Activated CD4-positive, alpha-beta memory T cell treated with anti-CD3 and anti-CD28 coated beads for 36 hours (primary cell): ENCODE measurements at regions of chrX and their contacts with region 1.

Region 1: DNA sequence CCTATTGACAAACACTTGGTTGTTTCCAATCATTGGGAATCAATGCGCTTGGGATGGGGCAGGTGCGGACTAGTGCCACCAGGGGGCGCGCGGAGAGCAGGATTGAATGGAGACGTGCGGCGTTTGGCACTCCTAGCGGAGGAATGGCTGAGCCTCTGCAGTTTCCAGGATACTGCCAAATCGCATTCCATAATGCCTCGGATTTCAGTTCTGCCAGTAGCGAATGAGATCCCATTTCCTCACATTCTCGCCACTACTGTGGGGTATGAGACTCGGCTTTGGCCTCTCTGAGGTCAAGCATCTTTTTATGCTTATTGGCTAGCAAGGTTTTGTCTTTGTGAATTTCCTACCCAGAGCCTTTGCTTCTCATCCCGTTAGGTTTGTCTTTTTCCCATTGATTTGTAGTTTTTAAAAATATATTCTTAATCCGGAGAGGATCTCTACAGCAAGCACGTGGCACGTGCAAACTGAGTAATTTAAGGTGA is 28.7 kb downstream of the CLDN34 start:
- DNase-seq: peak; percentile 78
- H3K4me3 Mint-ChIP-seq: no peak overlapping the region
- H3K27ac Mint-ChIP-seq: no peak overlapping the region
- H3K4me1 Mint-ChIP-seq: peaks cover 20% of the 10 kb centered on the region
- H3K27me3 Mint-ChIP-seq: no peaks in the 10 kb centered on the region

Region 2: GRCh38 chrX:9482408-9482807 is 513.5 kb before region 1 on chrX:
- CTCF ChIA-PET with region 1: no interaction called
- POLR2A ChIA-PET with region 1: no interaction called
- intact Hi-C with region 1: no loop called
- DNase-seq: no peak
- H3K4me3 Mint-ChIP-seq: no peak overlapping the region
- H3K27ac Mint-ChIP-seq: no peak overlapping the region
- H3K4me1 Mint-ChIP-seq: peaks cover 9% of the 10 kb centered on the region
- H3K27me3 Mint-ChIP-seq: no peaks in the 10 kb centered on the region

Region 3: GRCh38 chrX:9873952-9874351 is 121.9 kb before region 1 on chrX:
- CTCF ChIA-PET with region 1: interaction called, 3 read pairs
- POLR2A ChIA-PET with region 1: no interaction called
- intact Hi-C with region 1: loop called (anchors 1 kb)
- DNase-seq: peak; percentile 48
- H3K4me3 Mint-ChIP-seq: no peak overlapping the region
- H3K27ac Mint-ChIP-seq: no peak overlapping the region
- H3K4me1 Mint-ChIP-seq: peaks cover 7% of the 10 kb centered on the region
- H3K27me3 Mint-ChIP-seq: peaks cover 17% of the 10 kb centered on the region

Region 4: DNA sequence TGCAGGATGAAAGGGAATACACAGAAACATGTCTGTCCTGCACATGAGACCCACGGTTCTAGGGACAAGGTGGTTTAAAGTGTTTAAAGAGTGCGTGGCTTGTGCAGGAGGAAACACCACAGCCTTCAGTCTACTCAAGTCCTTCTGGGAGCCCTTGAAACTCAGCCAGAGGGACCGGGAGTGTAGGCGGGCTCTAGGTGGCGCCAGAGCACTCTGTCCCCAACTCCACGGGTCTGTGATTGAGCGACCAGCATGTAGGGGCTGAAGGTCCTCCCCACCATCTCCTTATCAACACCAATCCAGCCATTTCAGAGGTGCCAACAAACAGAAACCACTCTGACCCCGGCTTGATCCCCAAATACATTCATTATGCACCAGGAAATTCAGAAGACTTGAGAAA is 110.7 kb before region 1 on chrX:
- CTCF ChIA-PET with region 1: interaction called, 5 read pairs
- POLR2A ChIA-PET with region 1: no interaction called
- intact Hi-C with region 1: loop called (anchors 2 kb)
- DNase-seq: peak; percentile 69
- H3K4me3 Mint-ChIP-seq: no peak overlapping the region
- H3K27ac Mint-ChIP-seq: no peak overlapping the region
- H3K4me1 Mint-ChIP-seq: peaks cover 1% of the 10 kb centered on the region
- H3K27me3 Mint-ChIP-seq: peaks cover 5% of the 10 kb centered on the region

Region 5: DNA sequence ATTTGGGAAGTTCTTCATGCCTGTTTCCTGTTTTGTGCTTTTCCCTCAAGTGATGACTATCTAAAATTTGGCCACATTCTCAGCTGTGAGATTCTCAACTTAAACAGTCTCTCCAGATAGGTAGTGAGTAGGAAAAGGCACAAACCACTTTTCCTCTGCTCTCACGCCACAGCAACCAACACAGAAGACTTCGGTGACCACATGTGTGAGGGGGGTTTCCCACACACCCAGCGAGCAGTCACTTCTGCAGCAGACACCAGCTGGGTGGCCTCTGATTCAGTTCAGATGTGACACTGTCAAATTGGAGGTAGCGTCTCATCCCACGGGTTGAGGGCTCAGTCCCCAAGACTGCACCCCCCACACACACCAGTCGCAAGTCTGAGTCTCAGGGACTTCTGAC is 53.8 kb before region 1 on chrX:
- CTCF ChIA-PET with region 1: no interaction called
- POLR2A ChIA-PET with region 1: no interaction called
- intact Hi-C with region 1: loop called (anchors 1 kb)
- DNase-seq: peak; percentile 83
- H3K4me3 Mint-ChIP-seq: no peak overlapping the region
- H3K27ac Mint-ChIP-seq: peak overlapping the region; percentile 57
- H3K4me1 Mint-ChIP-seq: peaks cover 14% of the 10 kb centered on the region
- H3K27me3 Mint-ChIP-seq: peaks cover 19% of the 10 kb centered on the region

Region 6: GRCh38 chrX:9977635-9978034 is 18.3 kb before region 1 on chrX:
- CTCF ChIA-PET with region 1: no interaction called
- POLR2A ChIA-PET with region 1: no interaction called
- intact Hi-C with region 1: no loop called
- DNase-seq: no peak
- H3K4me3 Mint-ChIP-seq: no peak overlapping the region
- H3K27ac Mint-ChIP-seq: no peak overlapping the region
- H3K4me1 Mint-ChIP-seq: no peaks in the 10 kb centered on the region
- H3K27me3 Mint-ChIP-seq: no peaks in the 10 kb centered on the region

Region 7: GRCh38 chrX:10014462-10015356 is 18.8 kb after region 1 on chrX:
- CTCF ChIA-PET with region 1: interaction called, 17 read pairs
- POLR2A ChIA-PET with region 1: interaction called, 3 read pairs
- intact Hi-C with region 1: loop called (anchors 1 kb)
- DNase-seq: peak; percentile 75
- H3K4me3 Mint-ChIP-seq: peak overlapping the region; percentile 68
- H3K27ac Mint-ChIP-seq: no peak overlapping the region
- H3K4me1 Mint-ChIP-seq: peaks cover 42% of the 10 kb centered on the region
- H3K27me3 Mint-ChIP-seq: peaks cover 6% of the 10 kb centered on the region

Region 8: DNA sequence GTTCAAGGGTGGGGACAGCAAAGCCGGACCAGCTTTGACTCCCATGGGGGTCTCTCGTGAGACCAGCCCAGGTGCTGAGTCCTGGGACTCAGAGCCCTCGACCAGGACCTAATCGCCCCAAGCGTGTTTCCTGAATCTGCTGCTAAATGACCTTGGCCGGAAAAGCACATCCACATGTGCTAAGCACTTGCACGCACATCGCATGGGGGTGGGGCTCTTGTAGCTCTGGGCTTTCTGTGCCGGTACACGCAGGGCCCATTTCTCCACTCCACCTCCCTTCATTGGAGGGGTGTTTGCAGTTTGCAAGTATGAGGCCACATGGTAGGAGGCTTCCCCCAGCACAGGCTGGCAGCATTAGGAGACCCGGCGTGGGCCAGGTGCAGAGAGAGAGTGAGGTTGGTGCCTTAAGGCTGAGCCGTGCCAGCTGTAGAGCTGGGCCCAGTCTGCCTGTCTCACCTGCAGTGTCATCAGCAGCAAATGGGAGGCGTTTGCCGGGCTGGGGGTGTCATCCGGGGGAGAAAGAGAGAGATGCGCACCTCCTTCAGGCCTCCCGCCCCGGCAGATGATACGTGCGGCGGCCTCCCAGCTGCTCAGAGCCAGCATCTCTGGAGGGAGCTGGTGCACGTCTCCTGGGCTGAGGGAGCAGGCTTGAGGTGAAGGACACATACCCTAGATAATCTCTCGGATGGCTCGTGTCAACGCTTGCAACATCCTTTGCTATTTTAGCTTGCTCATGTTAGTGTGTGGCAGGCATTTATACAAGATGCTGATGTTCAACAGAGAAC is 115.7 kb after region 1 on chrX:
- CTCF ChIA-PET with region 1: interaction called, 41 read pairs
- POLR2A ChIA-PET with region 1: interaction called, 9 read pairs
- intact Hi-C with region 1: loop called (anchors 1 kb)
- DNase-seq: peak; percentile 63
- H3K4me3 Mint-ChIP-seq: peak overlapping the region; percentile 69
- H3K27ac Mint-ChIP-seq: peak overlapping the region; percentile 94
- H3K4me1 Mint-ChIP-seq: peaks cover 62% of the 10 kb centered on the region
- H3K27me3 Mint-ChIP-seq: no peaks in the 10 kb centered on the region